Activated CD4-positive, alpha-beta T cell treated with anti-CD3 and anti-CD28 coated beads for 36 hours (primary cell): ENCODE measurements at regions of chr9 and their contacts with region 1.

Region 1: DNA sequence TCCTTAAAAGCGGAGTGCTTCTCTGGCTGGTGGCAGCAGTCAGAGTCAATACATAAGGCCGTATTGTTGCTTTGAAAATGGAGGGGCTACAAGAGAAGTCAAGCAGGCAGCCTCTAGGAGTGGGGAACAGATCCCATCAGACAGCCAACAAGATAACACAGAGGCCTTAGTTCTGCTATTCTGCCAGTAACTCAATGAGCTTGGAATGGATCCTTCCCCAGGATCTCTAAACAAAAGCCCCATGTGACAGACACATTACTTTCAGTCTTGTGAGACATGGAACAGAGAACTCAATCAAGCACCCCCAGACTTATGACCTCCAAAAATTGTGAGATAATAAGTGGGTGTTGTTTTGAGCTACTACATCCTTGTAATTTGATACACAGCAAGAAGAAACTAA is 158.6 kb downstream of the RFX3 start:
- DNase-seq: no peak
- ATAC-seq: no peak
- H3K4me3 Mint-ChIP-seq: no peak overlapping the region
- H3K27ac Mint-ChIP-seq: no peak overlapping the region
- H3K4me1 Mint-ChIP-seq: peaks cover 6% of the 10 kb centered on the region
- H3K27me3 Mint-ChIP-seq: no peaks in the 10 kb centered on the region

Region 2: DNA sequence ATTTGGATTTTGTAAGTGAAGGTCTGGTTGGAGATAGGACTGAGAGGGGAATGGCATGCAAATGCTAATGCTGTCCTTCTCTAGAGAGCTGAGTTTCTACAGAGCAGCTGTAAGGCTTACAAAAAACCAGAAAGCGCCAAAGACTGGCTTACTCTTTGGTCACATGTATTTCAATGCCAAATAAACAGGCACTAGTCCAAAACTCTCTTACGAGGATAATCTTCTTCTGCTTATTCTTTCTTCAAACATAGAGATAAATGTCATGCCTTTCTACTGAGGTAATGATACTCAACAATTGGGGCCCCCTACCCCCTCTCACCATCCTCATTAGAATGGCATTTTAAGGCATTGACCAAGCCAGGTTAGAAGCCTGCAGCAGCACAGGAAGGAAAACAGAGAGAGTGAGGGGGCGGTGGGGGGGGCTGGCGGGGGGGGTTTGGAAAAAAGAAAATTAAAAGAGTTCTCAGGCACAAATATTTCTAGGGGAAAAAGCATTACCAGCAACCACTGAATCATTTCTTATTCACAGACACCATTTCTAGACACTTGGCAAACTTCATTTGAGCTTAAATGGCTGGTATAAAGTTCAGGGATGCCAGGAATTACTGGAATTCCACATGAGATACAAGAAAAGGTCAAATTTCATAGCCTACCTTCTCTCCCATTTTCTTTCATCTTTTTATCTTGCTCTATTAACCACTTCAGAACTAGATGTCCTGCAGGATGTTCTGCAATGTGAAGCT is 557.3 kb before region 1 on chr9:
- CTCF ChIA-PET with region 1: no interaction called
- POLR2A ChIA-PET with region 1: no interaction called
- intact Hi-C with region 1: no loop called
- DNase-seq: no peak
- ATAC-seq: no peak
- H3K4me3 Mint-ChIP-seq: no peak overlapping the region
- H3K27ac Mint-ChIP-seq: no peak overlapping the region
- H3K4me1 Mint-ChIP-seq: no peaks in the 10 kb centered on the region
- H3K27me3 Mint-ChIP-seq: no peaks in the 10 kb centered on the region

Region 3: DNA sequence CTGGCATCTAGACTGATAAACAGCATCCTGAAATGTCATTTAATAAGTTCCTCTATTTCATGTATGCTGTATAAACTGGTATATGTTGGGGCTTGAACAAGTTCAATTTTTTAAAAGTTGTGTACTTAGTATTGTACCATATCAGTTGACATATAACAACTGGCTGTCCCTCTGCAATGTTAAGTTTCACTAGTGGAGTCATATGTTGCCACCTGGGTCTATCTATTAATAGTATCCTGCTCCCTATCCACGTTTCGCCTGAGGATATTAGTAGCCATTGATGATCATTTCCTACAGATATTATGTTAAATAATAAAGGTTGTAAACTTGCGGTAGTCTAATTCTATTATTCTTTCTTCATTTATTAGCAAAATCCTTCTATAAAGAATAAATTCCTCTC is 19.0 kb before region 1 on chr9:
- CTCF ChIA-PET with region 1: no interaction called
- POLR2A ChIA-PET with region 1: no interaction called
- intact Hi-C with region 1: loop called in 1 of 2 experiments (anchors 2 kb)
- DNase-seq: no peak
- ATAC-seq: no peak
- H3K4me3 Mint-ChIP-seq: no peak overlapping the region
- H3K27ac Mint-ChIP-seq: no peak overlapping the region
- H3K4me1 Mint-ChIP-seq: peaks cover 18% of the 10 kb centered on the region
- H3K27me3 Mint-ChIP-seq: no peaks in the 10 kb centered on the region

Region 4: GRCh38 chr9:3398232-3398648 is 31.1 kb after region 1 on chr9:
- CTCF ChIA-PET with region 1: no interaction called
- POLR2A ChIA-PET with region 1: no interaction called
- intact Hi-C with region 1: no loop called
- DNase-seq: peak; percentile 13
- ATAC-seq: peak; percentile 60
- H3K4me3 Mint-ChIP-seq: peak overlapping the region; percentile 35
- H3K27ac Mint-ChIP-seq: peak overlapping the region; percentile 94
- H3K4me1 Mint-ChIP-seq: peaks cover 33% of the 10 kb centered on the region
- H3K27me3 Mint-ChIP-seq: no peaks in the 10 kb centered on the region